ENCODE measurements at regions of chr9 and their contacts with region 1.

Region 1: GRCh38 chr9:36258208-36258988 is at the start of gene GNE:
- DNase-seq: peak; percentile 99
- ATAC-seq: peak; percentile 85
- H3K4me3 Mint-ChIP-seq: peak within 1 kb of the TSS; percentile 91
- H3K27ac Mint-ChIP-seq: peak within 1 kb of the TSS; percentile 90
- H3K4me1 Mint-ChIP-seq: peaks cover 8% of the 10 kb centered on the region
- H3K27me3 Mint-ChIP-seq: no peaks in the 10 kb centered on the region
- total RNA-seq, gene GNE: 17.0 to 19.0 TPM

Region 2: GRCh38 chr9:35976726-35977125 is 281.7 kb before region 1 on chr9:
- CTCF ChIA-PET with region 1: no interaction called
- POLR2A ChIA-PET with region 1: no interaction called
- intact Hi-C with region 1: no loop called
- DNase-seq: no peak
- ATAC-seq: no peak
- H3K4me3 Mint-ChIP-seq: no peak overlapping the region
- H3K27ac Mint-ChIP-seq: no peak overlapping the region
- H3K4me1 Mint-ChIP-seq: peaks cover 14% of the 10 kb centered on the region
- H3K27me3 Mint-ChIP-seq: peaks cover 51% of the 10 kb centered on the region

Region 3: DNA sequence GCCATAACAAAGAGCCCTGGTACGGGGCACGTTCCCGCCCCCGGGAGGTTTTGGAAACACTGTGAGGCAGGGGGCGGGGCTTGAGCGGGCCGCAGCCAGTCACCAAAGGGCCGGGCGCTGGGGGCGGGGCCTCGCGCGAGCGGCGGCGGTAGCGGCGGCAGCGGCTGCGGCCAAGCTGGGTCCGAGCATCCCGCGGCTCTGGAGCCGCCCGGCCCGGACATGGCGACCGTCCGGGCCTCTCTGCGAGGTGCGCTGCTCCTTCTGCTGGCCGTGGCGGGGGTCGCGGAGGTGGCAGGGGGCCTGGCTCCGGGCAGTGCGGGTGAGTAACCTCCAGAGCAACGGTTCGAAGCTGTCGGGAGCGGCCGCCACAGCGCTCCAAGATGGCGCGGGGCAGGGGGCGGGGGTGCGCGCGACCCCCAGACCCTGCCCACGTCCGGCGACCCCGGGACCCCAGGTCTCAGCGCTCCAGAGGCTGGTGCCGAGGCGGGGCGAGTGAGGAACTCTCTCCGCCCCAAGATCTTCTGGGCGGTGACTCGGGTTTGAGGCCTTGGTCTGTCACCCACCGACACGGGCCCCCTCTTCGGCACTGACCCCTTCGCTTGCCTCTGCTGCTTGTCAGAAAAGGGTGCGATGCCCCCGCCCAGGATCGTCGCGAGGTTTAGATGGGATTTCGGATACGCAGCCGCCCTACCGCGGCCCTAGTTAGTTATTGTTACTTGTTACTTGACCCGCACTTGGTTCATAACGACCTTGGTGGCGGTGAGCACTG is 221.4 kb before region 1 on chr9 and contains the start of gene RECK:
- CTCF ChIA-PET with region 1: no interaction called
- POLR2A ChIA-PET with region 1: no interaction called
- intact Hi-C with region 1: loop called in 1 of 2 experiments (anchors 2 kb)
- DNase-seq: peak; percentile 95
- ATAC-seq: peak; percentile 96
- H3K4me3 Mint-ChIP-seq: peak within 1 kb of the TSS; percentile 83
- H3K27ac Mint-ChIP-seq: peak within 1 kb of the TSS; percentile 85
- H3K4me1 Mint-ChIP-seq: peaks cover 41% of the 10 kb centered on the region
- H3K27me3 Mint-ChIP-seq: no peaks in the 10 kb centered on the region
- total RNA-seq, gene RECK: 5.0 to 5.6 TPM

Region 4: GRCh38 chr9:36136272-36136893 is 122.0 kb before region 1 on chr9 and contains the start of gene GLIPR2:
- CTCF ChIA-PET with region 1: no interaction called
- POLR2A ChIA-PET with region 1: no interaction called
- intact Hi-C with region 1: loop called in 1 of 2 experiments (anchors 1 kb)
- DNase-seq: peak; percentile 88
- ATAC-seq: peak; percentile 96
- H3K4me3 Mint-ChIP-seq: peak within 1 kb of the TSS; percentile 81
- H3K27ac Mint-ChIP-seq: peak within 1 kb of the TSS; percentile 48
- H3K4me1 Mint-ChIP-seq: peaks cover 45% of the 10 kb centered on the region
- H3K27me3 Mint-ChIP-seq: no peaks in the 10 kb centered on the region
- total RNA-seq, gene GLIPR2: 13.7 to 18.4 TPM

Region 5: DNA sequence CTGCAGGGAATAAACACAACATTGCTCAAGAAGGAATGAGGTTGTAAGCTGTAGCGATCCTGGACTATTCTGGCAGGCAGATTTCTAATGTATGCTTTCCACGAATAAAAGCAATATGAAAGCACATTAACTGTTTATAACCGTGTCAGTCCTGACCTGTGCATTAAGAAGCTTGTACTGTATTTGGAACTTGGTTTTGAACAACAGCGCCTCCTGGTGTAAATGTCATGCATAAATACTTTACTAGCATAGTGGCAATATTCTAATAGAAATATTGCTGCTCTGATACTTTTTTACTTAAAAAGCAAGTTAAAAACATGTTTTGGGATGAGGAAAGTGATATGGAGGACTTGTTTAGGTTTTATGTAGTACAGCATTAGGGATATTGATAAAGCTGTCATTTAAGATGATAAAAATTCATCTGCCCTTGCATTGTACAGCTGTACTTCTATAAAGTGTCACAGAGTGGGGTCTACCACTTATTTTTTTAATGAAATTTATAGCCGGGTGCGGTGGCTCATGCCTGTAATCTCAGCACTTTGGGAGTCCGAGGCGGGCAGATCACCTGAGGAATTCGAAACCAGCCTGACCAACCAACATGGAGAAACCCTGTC is 70.5 kb after region 1 on chr9:
- CTCF ChIA-PET with region 1: interaction called, 11 read pairs
- POLR2A ChIA-PET with region 1: no interaction called
- intact Hi-C with region 1: no loop called
- DNase-seq: peak; percentile 58
- ATAC-seq: peak; percentile 81
- H3K4me3 Mint-ChIP-seq: no peak overlapping the region
- H3K27ac Mint-ChIP-seq: no peak overlapping the region
- H3K4me1 Mint-ChIP-seq: no peaks in the 10 kb centered on the region
- H3K27me3 Mint-ChIP-seq: no peaks in the 10 kb centered on the region

Region 6: GRCh38 chr9:36461323-36461722 is 202.9 kb after region 1 on chr9:
- CTCF ChIA-PET with region 1: no interaction called
- POLR2A ChIA-PET with region 1: no interaction called
- intact Hi-C with region 1: loop called in 1 of 2 experiments (anchors 5 kb)
- DNase-seq: no peak
- ATAC-seq: no peak
- H3K4me3 Mint-ChIP-seq: no peak overlapping the region
- H3K27ac Mint-ChIP-seq: no peak overlapping the region
- H3K4me1 Mint-ChIP-seq: peaks cover 56% of the 10 kb centered on the region
- H3K27me3 Mint-ChIP-seq: no peaks in the 10 kb centered on the region

Region 7: DNA sequence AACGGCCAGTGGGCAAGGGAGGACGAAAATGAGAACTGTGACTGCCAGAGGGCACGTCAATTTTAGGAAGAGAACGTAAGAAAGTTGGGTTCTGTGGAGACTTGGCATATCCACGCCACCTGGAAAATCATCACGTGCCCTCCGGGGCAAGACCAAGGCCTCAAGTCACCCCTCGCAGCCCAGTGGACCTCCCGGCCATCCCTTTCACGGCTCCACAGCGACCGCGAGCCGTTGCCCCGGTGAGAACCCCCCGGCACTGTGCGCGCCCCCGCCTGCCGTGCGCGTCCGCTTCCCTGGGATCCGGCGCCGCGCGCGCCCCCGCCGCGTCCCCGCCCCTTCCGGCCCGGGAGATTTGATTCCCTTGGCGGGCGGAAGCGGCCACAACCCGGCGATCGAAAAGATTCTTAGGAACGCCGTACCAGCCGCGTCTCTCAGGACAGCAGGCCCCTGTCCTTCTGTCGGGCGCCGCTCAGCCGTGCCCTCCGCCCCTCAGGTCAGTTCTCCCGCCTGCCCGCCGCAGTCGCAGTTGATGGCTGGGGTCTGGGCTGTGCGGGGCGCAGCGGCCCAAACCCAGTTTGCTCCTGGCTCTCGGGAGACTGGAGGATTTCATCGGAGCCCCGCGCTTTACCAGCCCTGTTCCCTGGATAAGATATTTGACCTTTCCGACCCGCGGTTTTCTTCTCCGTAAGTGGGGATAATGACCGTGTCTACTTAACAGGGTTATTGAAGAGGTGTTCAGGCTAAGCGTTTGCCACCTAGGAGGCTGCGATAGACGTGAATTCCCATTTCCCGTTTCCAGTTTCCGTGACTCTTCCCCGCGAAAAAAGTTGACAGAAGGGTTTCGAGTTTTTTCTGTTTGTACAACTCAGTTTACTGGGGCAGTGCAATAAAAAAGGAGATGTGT is 314.4 kb after region 1 on chr9 and contains the start of gene MELK:
- CTCF ChIA-PET with region 1: interaction called, 3 read pairs
- POLR2A ChIA-PET with region 1: interaction called, 3 read pairs
- intact Hi-C with region 1: loop called in 1 of 2 experiments (anchors 5 kb)
- DNase-seq: peak; percentile 89
- ATAC-seq: peak; percentile 73
- H3K4me3 Mint-ChIP-seq: peak within 1 kb of the TSS; percentile 97
- H3K27ac Mint-ChIP-seq: peak within 1 kb of the TSS; percentile 85
- H3K4me1 Mint-ChIP-seq: peaks cover 27% of the 10 kb centered on the region
- H3K27me3 Mint-ChIP-seq: no peaks in the 10 kb centered on the region
- total RNA-seq, gene MELK: 63.9 to 66.1 TPM

Region 8: DNA sequence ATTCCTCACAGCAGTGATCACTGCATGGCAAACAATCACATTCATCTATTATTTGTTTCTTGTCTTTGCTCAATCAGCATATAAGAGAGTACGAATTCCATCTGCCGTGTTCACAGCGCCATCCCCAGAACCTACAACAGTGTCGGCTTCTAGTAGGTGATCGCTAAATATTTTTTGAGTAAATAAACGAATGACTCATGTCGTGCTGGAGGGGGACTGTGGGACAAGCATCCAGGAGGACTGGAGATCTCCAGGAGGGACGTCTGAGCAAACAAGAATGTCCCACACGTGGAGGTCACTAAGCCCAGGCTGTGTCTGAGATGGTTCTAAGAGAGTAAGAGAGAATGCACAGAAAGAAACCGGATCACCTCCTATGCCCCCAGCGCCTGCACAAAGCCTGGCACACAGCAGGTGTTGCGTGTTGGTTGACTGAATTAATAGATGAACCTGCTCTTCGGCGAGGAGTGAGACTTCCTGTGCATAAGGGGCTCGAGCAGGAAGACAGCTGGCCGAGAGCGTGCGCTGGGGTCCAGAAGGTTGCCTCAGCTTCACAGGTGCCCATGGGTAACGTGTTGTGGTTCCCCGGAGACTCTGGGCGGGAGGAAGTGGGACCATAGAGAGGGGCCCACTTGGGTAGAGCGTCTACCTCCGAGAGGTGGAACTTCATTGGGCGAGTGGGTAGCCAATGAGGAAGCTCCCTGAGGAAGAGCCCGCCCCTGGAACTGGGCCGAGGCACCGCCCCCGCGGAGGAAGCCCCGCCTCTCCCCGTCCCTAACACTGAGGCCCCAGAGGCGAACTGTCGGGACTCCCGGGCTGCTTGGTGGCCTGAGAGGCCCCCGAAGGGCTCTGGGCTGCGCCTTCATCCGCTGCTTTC is 507.3 kb after region 1 on chr9:
- CTCF ChIA-PET with region 1: no interaction called
- POLR2A ChIA-PET with region 1: no interaction called
- intact Hi-C with region 1: loop called in 1 of 2 experiments (anchors 1 kb)
- DNase-seq: peak; percentile 95
- ATAC-seq: peak; percentile 99
- H3K4me3 Mint-ChIP-seq: no peak overlapping the region
- H3K27ac Mint-ChIP-seq: peak overlapping the region; percentile 16
- H3K4me1 Mint-ChIP-seq: peaks cover 2% of the 10 kb centered on the region
- H3K27me3 Mint-ChIP-seq: peaks cover 6% of the 10 kb centered on the region

Measured in activated CD4-positive, alpha-beta T cell treated with anti-CD3 and anti-CD28 coated beads for 36 hours (primary cell).